Activated CD8-positive, alpha-beta memory T cell treated with anti-CD3 and anti-CD28 coated beads, Interleukin-2, amount 10 ng/mL, durations not matched to agents 7 days and 5 days (primary cell): ENCODE measurements at regions of chr19 and their contacts with region 1.

Region 1: DNA sequence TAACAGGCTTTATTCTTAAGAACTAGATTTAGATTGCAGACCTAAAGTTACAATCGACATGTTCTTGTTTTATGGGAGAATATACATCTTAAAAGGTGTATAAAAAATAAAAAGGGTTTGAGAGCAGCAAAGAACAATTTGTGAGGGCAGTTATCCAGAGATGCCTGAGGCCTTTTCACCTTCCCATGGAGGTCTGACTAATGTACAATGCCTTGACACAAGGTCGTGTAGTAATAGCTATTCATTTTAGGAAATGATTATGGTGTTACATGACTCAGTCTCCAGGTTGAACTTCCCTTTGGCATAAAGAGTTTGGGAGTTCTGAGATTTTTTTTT is 20.0 kb downstream of the CEACAM6 start:
- DNase-seq: no peak
- ATAC-seq: no peak
- H3K4me3 Mint-ChIP-seq: no peak overlapping the region
- H3K27ac Mint-ChIP-seq: no peak overlapping the region
- H3K4me1 Mint-ChIP-seq: peaks cover 23% of the 10 kb centered on the region
- H3K27me3 Mint-ChIP-seq: peaks cover 79% of the 10 kb centered on the region

Region 2: GRCh38 chr19:41785653-41786052 is 10.3 kb after region 1 on chr19:
- CTCF ChIA-PET with region 1: interaction called, 30 read pairs
- DNase-seq: peak; percentile 83
- ATAC-seq: peak; percentile 87
- H3K4me3 Mint-ChIP-seq: no peak overlapping the region
- H3K27ac Mint-ChIP-seq: no peak overlapping the region
- H3K4me1 Mint-ChIP-seq: peaks cover 17% of the 10 kb centered on the region
- H3K27me3 Mint-ChIP-seq: peaks cover 49% of the 10 kb centered on the region